Activated CD4-positive, alpha-beta T cell treated with anti-CD3 and anti-CD28 coated beads, Interleukin-2, amount 10 ng/mL, durations not matched to agents 7 days and 5 days (primary cell): ENCODE measurements at regions of chr3 and their contacts with region 1.

Region 1: DNA sequence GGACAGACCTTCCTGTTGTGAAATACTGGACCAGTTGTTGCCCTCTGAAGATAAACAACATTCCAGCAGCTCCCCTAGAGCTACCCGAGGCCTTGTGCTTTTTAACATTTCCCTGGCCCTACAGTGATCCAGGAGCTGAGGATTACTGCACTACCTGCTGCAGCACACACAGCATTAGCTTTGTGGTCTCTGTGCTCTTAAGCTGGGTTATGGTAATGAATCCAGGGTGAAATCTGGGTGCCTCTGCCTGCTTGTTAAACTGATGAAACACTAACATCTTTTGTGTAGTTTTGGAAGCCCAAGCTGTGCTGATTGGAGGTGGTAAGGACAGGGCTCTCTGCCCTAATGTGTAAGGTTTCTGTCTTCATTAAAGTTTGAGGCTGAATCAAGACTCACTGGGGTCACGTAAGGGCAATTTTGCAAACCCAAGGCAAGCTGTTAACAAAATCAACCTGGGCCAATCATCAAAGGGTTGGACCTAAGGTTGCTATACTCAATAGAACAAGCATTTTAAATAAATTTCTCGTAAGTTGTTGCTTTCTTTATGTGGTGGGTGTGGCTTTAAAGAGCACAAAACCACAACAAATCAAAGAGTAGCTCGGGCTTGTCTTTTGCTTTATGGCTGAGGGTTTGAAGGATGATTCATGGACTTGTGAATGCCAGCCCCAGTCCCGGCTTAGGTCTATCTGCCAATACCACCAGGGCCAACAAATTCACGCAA is 183.9 kb downstream of the TPRG1 start:
- DNase-seq: peak; percentile 62
- H3K4me3 Mint-ChIP-seq: peak overlapping the region; percentile 45
- H3K27ac Mint-ChIP-seq: peak overlapping the region; percentile 96
- H3K4me1 Mint-ChIP-seq: peaks cover 33% of the 10 kb centered on the region
- H3K27me3 Mint-ChIP-seq: no peaks in the 10 kb centered on the region

Region 2: GRCh38 chr3:189204184-189204866 is 151.3 kb before region 1 on chr3:
- CTCF ChIA-PET with region 1: no interaction called
- POLR2A ChIA-PET with region 1: no interaction called
- DNase-seq: no peak
- H3K4me3 Mint-ChIP-seq: no peak overlapping the region
- H3K27ac Mint-ChIP-seq: no peak overlapping the region
- H3K4me1 Mint-ChIP-seq: no peaks in the 10 kb centered on the region
- H3K27me3 Mint-ChIP-seq: no peaks in the 10 kb centered on the region

Region 3: GRCh38 chr3:189222927-189223636 is 132.6 kb before region 1 on chr3:
- CTCF ChIA-PET with region 1: no interaction called
- POLR2A ChIA-PET with region 1: no interaction called
- DNase-seq: no peak
- H3K4me3 Mint-ChIP-seq: no peak overlapping the region
- H3K27ac Mint-ChIP-seq: no peak overlapping the region
- H3K4me1 Mint-ChIP-seq: no peaks in the 10 kb centered on the region
- H3K27me3 Mint-ChIP-seq: no peaks in the 10 kb centered on the region

Region 4: GRCh38 chr3:189337673-189338091 is 18.0 kb before region 1 on chr3:
- CTCF ChIA-PET with region 1: interaction called, 14 read pairs
- POLR2A ChIA-PET with region 1: interaction called, 3 read pairs
- DNase-seq: no peak
- H3K4me3 Mint-ChIP-seq: no peak overlapping the region
- H3K27ac Mint-ChIP-seq: no peak overlapping the region
- H3K4me1 Mint-ChIP-seq: peaks cover 26% of the 10 kb centered on the region
- H3K27me3 Mint-ChIP-seq: no peaks in the 10 kb centered on the region

Region 5: DNA sequence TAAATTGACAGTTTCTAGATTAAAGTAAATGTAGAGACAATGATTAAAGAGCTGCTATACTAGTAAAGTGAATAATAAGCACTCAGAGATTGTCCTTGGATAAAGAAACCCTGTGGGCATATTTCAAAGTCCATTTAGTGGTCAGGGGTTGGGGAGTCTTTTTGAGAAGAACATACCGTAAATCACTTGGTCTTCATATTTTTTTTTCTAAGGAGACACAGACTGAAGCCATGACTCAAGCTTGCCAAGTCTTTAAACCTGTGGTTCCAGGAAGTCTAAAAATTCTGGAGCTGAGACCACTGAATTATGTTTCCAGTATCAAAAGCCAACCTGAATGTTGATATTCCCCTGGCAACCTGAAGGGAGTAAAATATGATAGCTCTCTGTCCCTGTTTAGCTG is 12.8 kb before region 1 on chr3:
- CTCF ChIA-PET with region 1: interaction called, 14 read pairs
- POLR2A ChIA-PET with region 1: interaction called, 3 read pairs
- DNase-seq: no peak
- H3K4me3 Mint-ChIP-seq: no peak overlapping the region
- H3K27ac Mint-ChIP-seq: no peak overlapping the region
- H3K4me1 Mint-ChIP-seq: peaks cover 1% of the 10 kb centered on the region
- H3K27me3 Mint-ChIP-seq: peaks cover 3% of the 10 kb centered on the region